ENCODE measurements at regions of chr6 and their contacts with region 1.

Region 1: GRCh38 chr6:156963712-156964700 is 186.8 kb downstream of the ARID1B start:
- DNase-seq: peak; percentile 73
- H3K4me3 Mint-ChIP-seq: no peak overlapping the region
- H3K27ac Mint-ChIP-seq: no peak overlapping the region
- H3K4me1 Mint-ChIP-seq: peaks cover 53% of the 10 kb centered on the region
- H3K27me3 Mint-ChIP-seq: no peaks in the 10 kb centered on the region

Region 2: GRCh38 chr6:156976216-156977127 is 12.5 kb after region 1 on chr6:
- CTCF ChIA-PET with region 1: interaction called, 4 read pairs
- intact Hi-C with region 1: loop called (anchors 1 kb)
- DNase-seq: peak; percentile 48
- H3K4me3 Mint-ChIP-seq: peak overlapping the region; percentile 67
- H3K27ac Mint-ChIP-seq: peak overlapping the region; percentile 63
- H3K4me1 Mint-ChIP-seq: peaks cover 78% of the 10 kb centered on the region
- H3K27me3 Mint-ChIP-seq: no peaks in the 10 kb centered on the region

Region 3: GRCh38 chr6:157244175-157244574 is 280.2 kb after region 1 on chr6:
- CTCF ChIA-PET with region 1: no interaction called
- intact Hi-C with region 1: no loop called
- DNase-seq: no peak
- H3K4me3 Mint-ChIP-seq: no peak overlapping the region
- H3K27ac Mint-ChIP-seq: no peak overlapping the region
- H3K4me1 Mint-ChIP-seq: peaks cover 4% of the 10 kb centered on the region
- H3K27me3 Mint-ChIP-seq: no peaks in the 10 kb centered on the region